Right ventricle myocardium superior (tissue), 1 donor: ENCODE measurements at regions of chr2 and their contacts with region 1.

Region 1: DNA sequence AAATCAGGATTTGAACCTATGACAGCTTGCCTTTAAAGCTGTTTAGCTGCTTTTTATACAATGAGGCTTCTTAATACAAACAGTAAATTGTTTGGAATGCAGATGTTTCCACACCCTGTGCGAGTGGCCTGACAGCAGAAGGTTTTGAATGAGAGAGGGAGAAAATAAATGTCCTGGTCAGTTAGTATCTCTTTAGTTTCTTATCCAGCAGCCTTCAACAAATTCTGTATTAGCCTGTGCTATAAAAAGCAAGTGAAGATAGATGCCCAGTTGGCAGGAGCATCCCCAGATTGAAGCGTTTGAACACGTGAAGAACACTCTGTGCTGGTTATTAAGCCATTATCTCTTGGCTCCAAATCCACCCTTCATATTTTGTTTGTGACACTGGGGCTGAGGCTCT is 70.6 kb downstream of the CERS6 start:
- DNase-seq: no peak
- ATAC-seq: peak; percentile 89

Region 2: GRCh38 chr2:168461942-168462331 is 64.7 kb before region 1 on chr2:
- intact Hi-C with region 1: loop called (anchors 5 kb)
- DNase-seq: no peak
- ATAC-seq: no peak